Naive thymus-derived CD4-positive, alpha-beta T cell (primary cell): ENCODE measurements at regions of chr5 and their contacts with region 1.

Region 1: GRCh38 chr5:55650386-55650785 is 61.7 kb downstream of the SLC38A9 start:
- DNase-seq: peak in 7 of 9 donors; percentile 27 to 76 (median 65)
- ATAC-seq: peak; percentile 84
- H3K4me3 ChIP-seq: no peak overlapping the region
- H3K4me3 Mint-ChIP-seq: peak overlapping the region in 9 of 10 donors; percentile 2 to 83 (median 50)
- H3K27ac ChIP-seq: no peak overlapping the region
- H3K27ac Mint-ChIP-seq: peak overlapping the region; percentile 60 to 93 (median 74)
- H3K4me1 ChIP-seq: peaks cover 0 to 22% of the 10 kb centered on the region in 2 donors
- H3K4me1 Mint-ChIP-seq: peaks cover 2 to 44% (median 33%) of the 10 kb centered on the region in 7 donors
- H3K27me3 ChIP-seq: no peaks in the 10 kb centered on the region
- H3K27me3 Mint-ChIP-seq: no peaks in the 10 kb centered on the region

Region 2: GRCh38 chr5:55593115-55593472 is 57.3 kb before region 1 on chr5:
- CTCF ChIA-PET with region 1: no interaction called
- POLR2A ChIA-PET with region 1: no interaction called
- intact Hi-C with region 1: loop called in 1 of 2 experiments (anchors 2 kb)
- DNase-seq: no peak
- ATAC-seq: no peak
- H3K4me3 ChIP-seq: no peak overlapping the region
- H3K4me3 Mint-ChIP-seq: no peak overlapping the region
- H3K27ac ChIP-seq: no peak overlapping the region
- H3K27ac Mint-ChIP-seq: peak overlapping the region in 1 of 9 donors; percentile 25
- H3K4me1 ChIP-seq: peaks cover 0 to 6% of the 10 kb centered on the region in 2 donors
- H3K4me1 Mint-ChIP-seq: peaks cover 10 to 41% (median 13%) of the 10 kb centered on the region in 7 donors
- H3K27me3 ChIP-seq: no peaks in the 10 kb centered on the region
- H3K27me3 Mint-ChIP-seq: no peaks in the 10 kb centered on the region

Region 3: DNA sequence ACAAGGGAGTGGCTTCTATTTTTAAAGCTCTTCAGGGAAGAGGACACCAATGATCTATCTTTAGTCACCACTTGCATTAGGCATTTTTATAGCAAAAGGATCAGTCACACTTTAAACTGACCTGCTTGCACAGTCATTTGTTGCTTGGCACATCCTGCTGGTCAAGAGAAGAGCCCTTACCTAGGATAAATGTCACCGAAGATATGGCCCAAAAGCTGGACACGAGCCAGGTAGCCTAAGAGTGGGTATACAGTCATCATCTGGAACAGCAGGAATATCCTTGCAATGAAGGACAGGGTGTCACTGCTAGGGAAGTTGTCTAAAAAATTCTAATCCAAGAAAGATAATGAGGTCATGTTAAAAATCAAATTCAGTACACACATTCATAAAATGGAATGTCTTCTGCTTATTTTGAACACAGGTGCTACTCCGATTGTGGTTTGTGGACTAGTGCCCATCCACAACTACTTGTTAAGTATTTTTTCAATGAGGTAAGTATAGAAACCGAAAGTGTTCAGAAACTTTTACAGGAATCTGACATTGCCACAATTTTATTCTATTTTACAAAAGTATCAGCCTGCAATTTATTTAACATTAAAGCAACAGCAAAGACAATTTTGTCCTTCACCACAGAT is 16.7 kb before region 1 on chr5:
- CTCF ChIA-PET with region 1: interaction called, 4 read pairs
- POLR2A ChIA-PET with region 1: interaction called, 3 read pairs
- intact Hi-C with region 1: loop called in 1 of 2 experiments (anchors 2 kb)
- DNase-seq: peak in 1 of 9 donors; percentile 3
- ATAC-seq: no peak
- H3K4me3 ChIP-seq: no peak overlapping the region
- H3K4me3 Mint-ChIP-seq: peak overlapping the region in 8 of 10 donors; percentile 32 to 68 (median 55)
- H3K27ac ChIP-seq: no peak overlapping the region
- H3K27ac Mint-ChIP-seq: peak overlapping the region in 8 of 9 donors; percentile 16 to 81 (median 43)
- H3K4me1 ChIP-seq: no peaks in the 10 kb centered on the region
- H3K4me1 Mint-ChIP-seq: peaks cover 0 to 18% (median 12%) of the 10 kb centered on the region in 7 donors
- H3K27me3 ChIP-seq: no peaks in the 10 kb centered on the region
- H3K27me3 Mint-ChIP-seq: no peaks in the 10 kb centered on the region

Region 4: GRCh38 chr5:56095579-56096102 is 445.3 kb after region 1 on chr5:
- CTCF ChIA-PET with region 1: no interaction called
- POLR2A ChIA-PET with region 1: no interaction called
- intact Hi-C with region 1: no loop called
- DNase-seq: no peak
- ATAC-seq: no peak
- H3K4me3 ChIP-seq: no peak overlapping the region
- H3K4me3 Mint-ChIP-seq: peak overlapping the region in 9 of 10 donors; percentile 32 to 77 (median 56)
- H3K27ac ChIP-seq: peak overlapping the region; percentile 54
- H3K27ac Mint-ChIP-seq: peak overlapping the region; percentile 66 to 100 (median 91)
- H3K4me1 ChIP-seq: peaks cover 0 to 94% of the 10 kb centered on the region in 2 donors
- H3K4me1 Mint-ChIP-seq: peaks cover 56 to 97% (median 86%) of the 10 kb centered on the region in 7 donors
- H3K27me3 ChIP-seq: no peaks in the 10 kb centered on the region
- H3K27me3 Mint-ChIP-seq: no peaks in the 10 kb centered on the region